ENCODE measurements at regions of chr22 and their contacts with region 1.

Region 1: DNA sequence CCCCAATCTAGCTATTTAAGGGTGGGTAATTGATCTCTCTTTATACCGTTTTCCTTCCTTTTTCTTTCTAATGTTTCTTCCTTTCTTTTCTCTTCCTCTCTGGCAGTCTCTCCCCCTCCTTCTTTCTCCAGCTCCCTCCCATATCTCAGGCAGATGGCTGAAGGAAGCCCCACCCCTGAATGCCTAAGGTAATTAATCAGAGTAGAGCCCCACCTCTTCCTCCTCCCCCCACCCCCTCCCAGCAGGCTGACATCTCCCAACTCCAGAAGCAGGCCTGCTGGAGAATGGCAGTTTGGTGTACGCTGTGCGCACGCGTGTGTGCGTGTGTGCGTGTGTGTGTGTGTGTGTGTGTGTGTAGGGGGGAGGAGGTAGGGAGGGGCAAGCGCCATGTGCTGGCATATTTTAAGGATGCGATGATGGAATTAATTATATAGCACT is 122.6 kb downstream of the APOL5 start:
- DNase-seq: peak; percentile 83 to 92 (median 85)
- ATAC-seq: peak; percentile 63 to 91 (median 84)
- H3K4me3 ChIP-seq: peak overlapping the region; percentile 5 to 63 (median 50)
- H3K27ac ChIP-seq: peak overlapping the region in 11 of 12 donors; percentile 44 to 85 (median 77)
- H3K4me1 ChIP-seq: peaks cover 5 to 78% (median 50%) of the 10 kb centered on the region in 12 donors
- H3K27me3 ChIP-seq: no peaks in the 10 kb centered on the region
- CTCF ChIP-seq: no peak
- POLR2A ChIP-seq: no peak

Region 2: DNA sequence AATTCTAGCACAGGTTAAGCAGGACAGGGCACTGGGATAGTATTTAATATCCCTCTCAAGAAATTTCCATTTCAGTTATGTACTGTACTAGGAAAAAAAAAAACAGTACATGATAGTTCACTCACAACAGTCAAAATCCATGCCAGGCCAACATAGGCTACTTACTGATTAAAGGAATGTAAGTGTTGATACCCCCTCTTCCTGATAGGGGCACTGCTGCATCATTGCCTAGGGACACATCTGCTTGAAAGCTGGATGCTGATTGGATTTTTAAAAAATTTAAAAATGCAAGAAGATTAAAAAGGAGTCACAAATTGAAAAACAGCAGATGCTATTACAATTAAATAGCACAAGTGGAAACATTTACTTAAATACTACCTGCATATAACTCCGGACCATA is 79.3 kb before region 1 on chr22:
- intact Hi-C with region 1: loop called in 4 of 10 experiments (anchors 5 to 10 kb)
- DNase-seq: no peak
- ATAC-seq: peak in 2 of 4 donors; percentile 57
- H3K4me3 ChIP-seq: no peak overlapping the region
- H3K27ac ChIP-seq: no peak overlapping the region
- H3K4me1 ChIP-seq: peaks cover 0 to 16% (median 1%) of the 10 kb centered on the region in 12 donors
- H3K27me3 ChIP-seq: no peaks in the 10 kb centered on the region
- CTCF ChIP-seq: peak in 11 of 12 donors; percentile 12 to 51 (median 30)
- POLR2A ChIP-seq: no peak

Region 3: GRCh38 chr22:35777335-35777975 is 62.9 kb before region 1 on chr22:
- intact Hi-C with region 1: loop called in 2 of 10 experiments (anchors 5 to 10 kb)
- DNase-seq: no peak
- ATAC-seq: no peak
- H3K4me3 ChIP-seq: no peak overlapping the region
- H3K27ac ChIP-seq: no peak overlapping the region
- H3K4me1 ChIP-seq: peaks cover 0 to 39% (median 12%) of the 10 kb centered on the region in 12 donors
- H3K27me3 ChIP-seq: no peaks in the 10 kb centered on the region
- CTCF ChIP-seq: no peak
- POLR2A ChIP-seq: no peak

Region 4: GRCh38 chr22:35802885-35803284 is 37.4 kb before region 1 on chr22:
- intact Hi-C with region 1: no loop called
- DNase-seq: no peak
- ATAC-seq: no peak
- H3K4me3 ChIP-seq: no peak overlapping the region
- H3K27ac ChIP-seq: no peak overlapping the region
- H3K4me1 ChIP-seq: peaks cover 0 to 52% (median 11%) of the 10 kb centered on the region in 12 donors
- H3K27me3 ChIP-seq: no peaks in the 10 kb centered on the region
- CTCF ChIP-seq: no peak
- POLR2A ChIP-seq: no peak

Region 5: GRCh38 chr22:35883031-35883620 is 42.8 kb after region 1 on chr22:
- intact Hi-C with region 1: loop called in 1 of 10 experiments (anchors 2 kb)
- DNase-seq: peak in 1 of 5 donors; percentile 46
- ATAC-seq: peak; percentile 29 to 85 (median 81)
- H3K4me3 ChIP-seq: peak overlapping the region in 1 of 12 donors; percentile 2
- H3K27ac ChIP-seq: peak overlapping the region in 11 of 12 donors; percentile 18 to 84 (median 73)
- H3K4me1 ChIP-seq: peaks cover 3 to 71% (median 34%) of the 10 kb centered on the region in 12 donors
- H3K27me3 ChIP-seq: no peaks in the 10 kb centered on the region
- CTCF ChIP-seq: no peak
- POLR2A ChIP-seq: no peak

Region 6: DNA sequence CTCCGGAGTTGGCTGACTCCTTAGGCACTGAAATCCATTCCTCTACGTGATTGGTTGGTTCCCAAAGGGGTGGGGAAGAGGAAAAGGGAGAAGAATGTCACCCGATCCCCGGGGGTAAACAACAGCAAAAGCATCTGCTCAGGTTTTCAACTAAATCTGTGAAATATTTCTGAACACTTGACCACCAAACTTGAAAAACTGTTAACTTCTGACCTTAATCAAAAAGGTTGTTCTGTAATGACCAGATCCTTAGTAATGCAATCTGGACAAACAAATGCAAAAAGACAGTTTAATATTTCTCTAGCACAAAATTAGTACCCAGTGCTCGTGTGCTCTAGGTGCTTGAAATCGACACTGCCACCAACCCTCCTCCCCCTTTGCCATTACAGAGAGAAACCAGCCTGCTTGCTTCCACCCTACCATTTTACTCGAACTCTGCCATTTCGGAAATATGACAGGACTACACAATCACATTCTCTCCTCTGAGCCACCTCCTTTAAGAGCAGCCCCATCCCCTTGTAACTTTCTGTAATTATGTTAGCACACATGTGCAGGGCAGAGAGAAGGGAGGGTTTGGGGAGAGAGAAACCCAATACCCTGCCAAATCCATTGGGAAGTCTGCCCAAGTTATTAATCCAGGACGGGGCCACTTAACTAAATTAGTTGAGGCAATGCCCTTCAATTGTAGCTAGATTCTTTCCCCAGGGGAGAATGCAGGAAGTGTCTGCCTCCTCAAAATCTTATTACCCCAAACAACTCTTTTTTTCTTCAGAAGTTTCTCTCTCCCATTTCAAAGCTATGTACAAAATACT is 74.5 kb after region 1 on chr22:
- intact Hi-C with region 1: loop called in 9 of 10 experiments (anchors 2 to 10 kb)
- DNase-seq: peak in 4 of 5 donors; percentile 69 to 85 (median 72)
- ATAC-seq: peak; percentile 87 to 92 (median 90)
- H3K4me3 ChIP-seq: peak overlapping the region; percentile 22 to 58 (median 46)
- H3K27ac ChIP-seq: peak overlapping the region; percentile 57 to 91 (median 84)
- H3K4me1 ChIP-seq: peaks cover 12 to 97% (median 77%) of the 10 kb centered on the region in 12 donors
- H3K27me3 ChIP-seq: no peaks in the 10 kb centered on the region
- CTCF ChIP-seq: no peak
- POLR2A ChIP-seq: no peak

Measured in heart left ventricle (tissue), 16 donors.